Vagina (tissue), 2 donors: ENCODE measurements at regions of chr13 and their contacts with region 1.

Region 1: DNA sequence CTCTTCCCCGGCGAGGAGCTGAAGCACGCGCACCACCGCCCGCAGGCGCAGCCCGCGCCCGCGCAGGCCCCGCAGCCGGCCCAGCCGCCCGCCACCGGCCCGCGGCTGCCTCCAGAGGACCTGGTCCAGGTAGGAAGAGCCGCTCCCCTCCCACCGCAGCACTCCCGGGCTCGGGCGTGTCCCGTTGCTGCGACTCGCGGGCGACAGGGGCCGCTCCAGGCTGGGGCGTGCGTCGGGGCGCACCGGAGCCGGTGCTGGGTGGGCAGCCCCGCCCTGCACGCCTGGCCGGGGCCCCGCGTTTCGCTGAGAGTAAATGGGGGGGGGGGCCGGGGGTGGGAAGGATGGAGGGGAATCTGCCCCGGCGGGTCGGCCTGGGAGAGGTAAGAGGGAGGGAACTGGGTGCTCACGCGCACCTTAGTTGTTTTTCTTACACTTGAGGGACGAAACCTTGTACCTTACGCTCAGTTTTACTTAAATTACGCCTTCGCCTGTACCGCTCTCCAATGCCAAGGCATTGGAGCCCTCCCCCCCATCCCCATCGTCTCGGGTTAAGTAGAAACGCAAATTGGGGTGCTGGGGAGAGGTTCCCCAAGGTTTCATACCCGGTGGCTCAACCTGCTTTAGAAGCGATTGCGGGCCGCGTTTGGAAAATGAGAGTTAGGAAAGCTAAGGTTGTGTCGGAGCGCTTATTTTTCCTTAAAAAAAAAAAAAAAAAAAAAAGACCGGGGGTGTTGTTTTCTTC is 826 bp downstream of the KLF5 start:
- DNase-seq: no peak
- H3K4me3 ChIP-seq: peak overlapping the region; percentile 73 to 93
- H3K27ac ChIP-seq: peak overlapping the region; percentile 86
- H3K4me1 ChIP-seq: peaks cover 7% of the 10 kb centered on the region
- H3K27me3 ChIP-seq: no peaks in the 10 kb centered on the region
- CTCF ChIP-seq: no peak
- POLR2A ChIP-seq: no peak

Region 2: DNA sequence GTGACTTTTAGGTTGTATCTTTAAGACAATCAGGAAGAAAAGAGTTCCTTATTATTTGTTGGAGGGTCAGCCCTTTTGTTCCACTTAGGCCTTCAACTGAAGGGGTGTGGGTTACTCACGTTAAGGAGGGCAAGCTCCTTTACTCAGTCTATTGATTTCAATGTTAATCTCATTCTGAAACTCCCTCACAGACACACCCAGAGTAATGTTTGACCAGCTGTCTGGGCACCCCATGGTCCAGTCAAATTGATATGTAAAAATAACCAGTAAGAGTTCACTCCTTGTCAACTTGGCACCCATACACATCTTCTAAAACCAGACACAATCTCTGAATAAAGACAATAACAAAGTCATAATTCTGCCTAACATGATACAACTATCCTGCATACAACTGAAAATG is 292.1 kb after region 1 on chr13:
- intact Hi-C with region 1: no loop called
- DNase-seq: no peak
- H3K4me3 ChIP-seq: no peak overlapping the region
- H3K27ac ChIP-seq: no peak overlapping the region
- H3K4me1 ChIP-seq: no peaks in the 10 kb centered on the region
- H3K27me3 ChIP-seq: no peaks in the 10 kb centered on the region
- CTCF ChIP-seq: no peak
- POLR2A ChIP-seq: no peak

Region 3: DNA sequence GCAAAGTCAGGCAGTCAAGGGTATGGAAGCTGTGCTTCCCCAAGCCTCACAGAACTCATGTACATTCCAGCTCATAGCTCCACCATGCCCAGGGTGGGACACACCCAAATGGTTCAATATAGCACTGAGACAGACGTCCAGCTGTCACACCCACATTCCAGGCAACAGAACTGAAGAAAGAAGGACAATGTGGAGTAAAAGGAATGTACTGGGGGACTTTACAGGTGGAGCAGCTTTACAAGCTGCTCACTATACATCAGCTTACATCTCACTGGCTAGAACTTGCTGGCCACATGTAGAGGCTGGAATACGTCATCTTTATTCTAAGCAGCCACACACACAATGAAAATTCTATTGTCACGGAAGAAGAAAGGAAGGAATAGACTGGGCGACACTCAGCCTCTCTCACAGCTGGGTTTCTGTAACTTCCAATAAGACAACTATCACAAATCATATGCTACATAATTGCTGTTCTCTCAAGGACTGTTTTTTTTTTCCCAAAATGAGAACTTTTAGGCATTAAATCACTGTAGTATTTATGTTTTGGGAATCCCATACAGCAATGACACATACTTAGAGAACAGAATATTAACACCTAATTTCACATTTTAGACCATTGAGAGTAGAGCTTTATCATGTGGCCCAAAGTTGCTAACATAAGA is 988.4 kb after region 1 on chr13:
- intact Hi-C with region 1: loop called (anchors 5 kb)
- DNase-seq: no peak
- H3K4me3 ChIP-seq: no peak overlapping the region
- H3K27ac ChIP-seq: no peak overlapping the region
- H3K4me1 ChIP-seq: peaks cover 6% of the 10 kb centered on the region
- H3K27me3 ChIP-seq: no peaks in the 10 kb centered on the region
- CTCF ChIP-seq: no peak
- POLR2A ChIP-seq: no peak

Region 4: GRCh38 chr13:74920920-74921319 is 1861.3 kb after region 1 on chr13:
- intact Hi-C with region 1: no loop called
- DNase-seq: no peak
- H3K4me3 ChIP-seq: no peak overlapping the region
- H3K27ac ChIP-seq: no peak overlapping the region
- H3K4me1 ChIP-seq: no peaks in the 10 kb centered on the region
- H3K27me3 ChIP-seq: no peaks in the 10 kb centered on the region
- CTCF ChIP-seq: no peak
- POLR2A ChIP-seq: no peak